Activated T-helper 2 cell treated with anti-CD3 and anti-CD28 coated beads, Interferon-gamma antibody, Interleukin-2, Interleukin-4, amounts not matched to agents 10 μg/mL and 5 μg/mL and 100 μg/mL, durations not matched to agents 14 hours and 24 hours and 36 hours (primary cell): ENCODE measurements at regions of chr1 and their contacts with region 1.

Region 1: GRCh38 chr1:116377541-116378529 is 4.8 kb downstream of the ATP1A1 start:
- DNase-seq: peak; percentile 28
- H3K4me3 Mint-ChIP-seq: peak overlapping the region; percentile 78
- H3K27ac Mint-ChIP-seq: peak overlapping the region; percentile 75
- H3K4me1 Mint-ChIP-seq: peaks cover 66% of the 10 kb centered on the region
- H3K27me3 Mint-ChIP-seq: no peaks in the 10 kb centered on the region

Region 2: DNA sequence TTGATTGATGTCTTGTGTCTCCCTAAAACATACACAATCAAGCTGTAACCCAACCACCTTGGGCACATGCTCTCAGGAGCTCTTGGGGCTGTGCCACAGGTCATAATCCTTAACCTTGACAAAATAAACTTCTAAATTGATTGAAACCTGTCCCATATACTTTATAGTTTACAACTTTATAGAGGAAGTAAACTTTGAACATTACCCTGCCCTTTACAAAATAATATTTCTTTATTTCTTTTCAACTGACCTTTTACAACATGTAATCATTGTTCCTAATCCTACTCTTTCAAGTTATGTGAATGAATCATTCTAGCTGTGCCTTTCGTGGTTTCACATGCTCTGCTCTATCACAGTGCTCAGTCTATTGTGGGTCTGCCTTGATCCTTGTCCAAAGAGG is 123.1 kb before region 1 on chr1:
- intact Hi-C with region 1: loop called (anchors 1 kb)
- DNase-seq: no peak
- H3K4me3 Mint-ChIP-seq: no peak overlapping the region
- H3K27ac Mint-ChIP-seq: no peak overlapping the region
- H3K4me1 Mint-ChIP-seq: peaks cover 26% of the 10 kb centered on the region
- H3K27me3 Mint-ChIP-seq: peaks cover 2% of the 10 kb centered on the region

Region 3: DNA sequence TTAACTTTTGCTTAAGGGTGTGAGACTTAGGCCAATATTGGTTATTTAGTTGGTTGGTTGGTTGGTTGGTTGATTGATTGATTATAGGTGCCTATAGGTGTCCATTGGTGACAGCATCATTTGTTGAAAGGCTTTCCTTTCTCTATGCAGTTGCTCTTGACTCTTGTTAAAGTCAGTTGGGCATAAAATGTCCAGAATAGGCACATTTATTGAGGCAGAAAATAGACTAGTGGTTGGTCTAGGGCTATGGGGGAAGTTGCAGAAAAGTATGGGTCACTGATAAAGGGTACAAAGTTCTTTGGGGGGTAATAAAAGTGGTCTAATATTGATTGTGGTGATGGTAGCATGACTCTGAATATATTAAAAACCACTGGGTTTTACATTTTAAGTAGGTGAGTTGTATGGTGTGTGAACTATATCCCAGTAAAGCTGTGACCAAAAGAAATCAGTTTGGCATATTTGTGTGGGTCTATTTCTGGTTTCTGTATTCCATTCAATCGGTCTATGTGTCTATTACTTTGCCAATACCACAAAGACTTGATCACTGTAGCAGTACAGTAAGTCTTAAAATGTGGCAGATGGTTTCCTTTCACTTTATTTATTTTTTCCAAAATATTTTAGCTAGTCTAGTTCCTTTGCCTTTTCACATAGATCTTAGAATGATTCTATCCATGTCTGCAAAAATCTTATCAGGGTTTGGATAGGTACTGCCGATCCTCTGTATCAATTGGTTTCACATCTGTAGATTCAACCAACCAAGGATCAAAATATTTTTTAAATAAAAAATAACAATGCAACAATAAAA is 58.2 kb after region 1 on chr1:
- intact Hi-C with region 1: loop called (anchors 5 kb)
- DNase-seq: no peak
- H3K4me3 Mint-ChIP-seq: no peak overlapping the region
- H3K27ac Mint-ChIP-seq: no peak overlapping the region
- H3K4me1 Mint-ChIP-seq: no peaks in the 10 kb centered on the region
- H3K27me3 Mint-ChIP-seq: peaks cover 29% of the 10 kb centered on the region

Region 4: DNA sequence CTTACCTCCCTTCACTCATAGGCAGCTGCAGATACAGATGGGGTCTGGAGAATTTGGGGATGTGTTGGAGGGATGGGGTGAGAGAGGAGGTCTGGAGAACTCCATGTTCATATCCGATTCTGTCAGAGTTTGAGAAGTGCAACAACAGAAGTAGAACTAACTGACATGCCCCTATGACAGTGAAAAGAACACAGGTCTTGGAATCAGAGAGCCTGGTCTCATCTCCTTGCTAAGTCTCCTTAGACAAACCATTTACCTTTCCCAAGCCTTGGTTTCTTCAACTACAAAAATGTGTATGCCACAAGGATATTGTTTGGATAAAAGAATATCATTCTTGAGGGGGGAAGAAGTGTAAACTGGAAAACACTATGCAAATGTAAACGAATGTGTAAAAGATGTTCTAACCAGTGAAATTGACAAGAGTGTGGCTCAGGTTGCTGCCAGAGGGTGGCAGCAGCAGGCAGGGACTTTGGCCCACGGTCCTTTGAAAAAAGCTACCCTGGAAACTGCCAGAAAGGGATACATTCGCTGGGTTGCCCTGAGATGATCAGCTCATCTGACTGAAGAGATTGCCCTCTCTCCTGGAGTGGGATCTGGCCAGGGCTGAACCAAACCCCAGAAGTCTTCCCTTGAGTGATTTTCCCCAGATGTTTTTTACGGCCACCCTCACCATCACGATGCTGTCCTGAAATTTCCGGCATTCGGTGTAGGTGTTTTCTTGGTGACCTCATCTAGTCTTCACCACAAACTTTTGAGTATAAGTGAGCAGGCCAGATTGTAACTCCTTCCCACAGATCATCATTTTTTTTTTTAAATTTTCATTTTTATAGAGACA is 359.4 kb after region 1 on chr1:
- intact Hi-C with region 1: loop called (anchors 2 kb)
- DNase-seq: peak; percentile 70
- H3K4me3 Mint-ChIP-seq: peak overlapping the region; percentile 61
- H3K27ac Mint-ChIP-seq: peak overlapping the region; percentile 100
- H3K4me1 Mint-ChIP-seq: peaks cover 69% of the 10 kb centered on the region
- H3K27me3 Mint-ChIP-seq: no peaks in the 10 kb centered on the region

Region 5: GRCh38 chr1:117001254-117001927 is 623.6 kb after region 1 on chr1 and contains the start of gene CD101:
- intact Hi-C with region 1: loop called (anchors 5 kb)
- DNase-seq: no peak
- H3K4me3 Mint-ChIP-seq: peak within 1 kb of the TSS; percentile 31
- H3K27ac Mint-ChIP-seq: peak within 1 kb of the TSS; percentile 46
- H3K4me1 Mint-ChIP-seq: peaks cover 37% of the 10 kb centered on the region
- H3K27me3 Mint-ChIP-seq: peaks cover 9% of the 10 kb centered on the region
- total RNA-seq, gene CD101: 0.18 and 0.25 TPM in 2 replicates